Right ventricle myocardium inferior (tissue), 1 donor: ENCODE measurements at regions of chr3 and their contacts with region 1.

Region 1: DNA sequence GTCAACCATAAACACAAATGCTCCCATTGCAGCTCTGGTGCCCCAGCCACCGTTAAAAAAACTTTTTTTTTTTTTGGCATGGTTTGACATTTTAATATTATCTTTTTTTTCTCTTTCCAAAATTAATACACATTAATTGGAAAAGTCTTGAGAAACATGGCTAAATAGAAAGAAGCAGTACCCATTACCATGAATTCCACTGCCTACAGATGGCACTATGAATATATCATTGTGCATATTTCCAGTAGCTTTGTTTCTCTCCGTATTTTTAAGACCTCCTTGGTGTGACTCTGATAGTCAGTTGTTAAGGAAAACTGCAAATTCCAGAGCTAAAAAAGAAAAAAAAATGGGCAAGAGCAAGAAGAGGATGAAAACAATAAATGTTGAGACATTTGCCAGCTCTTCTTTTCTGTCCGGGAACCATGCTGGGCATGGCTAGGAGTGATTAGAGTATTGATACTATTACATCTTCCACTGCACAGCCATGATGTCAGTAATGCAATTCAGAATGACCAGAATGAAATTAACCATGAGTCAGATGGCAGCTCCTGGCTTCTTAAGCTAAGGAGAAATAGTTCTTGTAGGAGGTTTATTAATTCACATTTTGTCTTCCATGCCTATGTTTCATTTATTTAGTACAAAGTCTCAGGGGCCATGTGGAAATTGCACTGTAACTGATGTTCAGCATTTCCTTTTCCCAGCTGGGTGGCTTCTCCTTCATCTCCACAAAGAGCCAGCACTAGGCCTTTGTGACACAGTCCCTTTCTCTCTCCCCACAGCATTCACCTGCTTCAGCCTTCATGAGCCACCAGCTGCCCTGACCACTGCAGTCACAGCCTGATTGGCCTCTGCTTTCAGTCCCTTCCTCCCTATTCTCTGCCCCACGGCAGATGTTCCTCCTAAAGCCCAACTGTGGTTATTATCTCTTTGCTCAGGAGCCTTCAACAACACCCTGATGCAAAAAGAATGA is 31.8 kb downstream of the SLC7A14 start:
- DNase-seq: no peak
- ATAC-seq: no peak

Region 2: GRCh38 chr3:170689893-170690660 is 136.0 kb after region 1 on chr3:
- intact Hi-C with region 1: loop called (anchors 1 kb)
- DNase-seq: peak; percentile 74
- ATAC-seq: peak; percentile 73